ENCODE measurements at regions of chr1 and their contacts with region 1.

Region 1: DNA sequence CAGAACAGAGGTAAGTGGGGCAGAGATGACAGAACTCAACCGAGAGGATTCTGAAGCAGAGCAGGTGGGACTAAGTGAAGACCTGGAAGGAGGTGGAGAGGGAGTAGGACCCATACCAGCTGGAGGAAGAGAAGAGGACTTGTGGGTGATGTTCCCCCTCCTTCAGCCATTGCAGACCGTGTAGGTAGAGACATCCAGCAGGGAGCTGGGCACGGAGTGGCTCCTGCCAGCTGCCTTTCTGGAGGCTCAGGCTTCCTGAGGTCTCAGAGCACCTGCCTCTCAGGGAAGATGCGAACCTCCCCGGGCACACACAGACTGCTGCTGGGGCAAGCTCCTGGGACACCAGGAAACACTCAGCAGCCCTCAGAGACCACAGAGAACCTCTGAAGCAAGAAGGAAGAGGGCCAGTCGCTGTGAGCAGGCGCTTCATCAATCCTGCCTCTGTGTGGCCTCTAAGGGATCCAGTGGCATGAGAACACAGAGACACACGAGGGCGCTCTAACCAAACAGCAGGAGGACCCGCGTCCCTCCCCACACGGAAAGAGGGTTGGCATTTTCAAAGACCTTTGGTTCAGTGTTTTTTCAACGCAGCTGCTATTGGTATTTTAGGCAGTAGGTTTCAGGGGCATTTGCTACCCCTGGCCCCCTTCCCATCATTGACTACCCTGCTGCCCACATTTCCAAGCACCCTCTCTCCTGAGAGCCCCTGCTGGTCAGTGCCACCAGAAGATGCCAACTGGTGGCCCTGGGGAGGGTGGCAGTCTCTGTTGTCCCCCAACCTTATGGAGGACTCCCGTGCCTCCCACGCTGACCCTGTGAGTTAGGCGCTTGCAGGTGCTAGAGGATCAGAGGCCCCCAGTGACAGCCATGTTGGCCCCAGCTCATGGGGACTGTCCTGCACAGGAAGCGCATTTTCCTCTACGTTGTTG is 89.6 kb upstream of the EDN2 start:
- DNase-seq: peak; percentile 79 to 92 (median 88)
- ATAC-seq: peak; percentile 80 to 90
- H3K4me3 ChIP-seq: no peak overlapping the region
- H3K27ac ChIP-seq: no peak overlapping the region
- H3K4me1 ChIP-seq: no peaks in the 10 kb centered on the region
- H3K27me3 ChIP-seq: no peaks in the 10 kb centered on the region

Region 2: GRCh38 chr1:41795205-41795762 is 221.2 kb after region 1 on chr1:
- intact Hi-C with region 1: loop called in 3 of 4 experiments (anchors 10 kb)
- DNase-seq: no peak
- ATAC-seq: no peak
- H3K4me3 ChIP-seq: no peak overlapping the region
- H3K27ac ChIP-seq: no peak overlapping the region
- H3K4me1 ChIP-seq: peaks cover 3% of the 10 kb centered on the region
- H3K27me3 ChIP-seq: no peaks in the 10 kb centered on the region

Measured in right cardiac atrium (tissue), 5 donors.